GM12878 (cell line): ENCODE measurements at regions of chr2 and their contacts with region 1.

Region 1: DNA sequence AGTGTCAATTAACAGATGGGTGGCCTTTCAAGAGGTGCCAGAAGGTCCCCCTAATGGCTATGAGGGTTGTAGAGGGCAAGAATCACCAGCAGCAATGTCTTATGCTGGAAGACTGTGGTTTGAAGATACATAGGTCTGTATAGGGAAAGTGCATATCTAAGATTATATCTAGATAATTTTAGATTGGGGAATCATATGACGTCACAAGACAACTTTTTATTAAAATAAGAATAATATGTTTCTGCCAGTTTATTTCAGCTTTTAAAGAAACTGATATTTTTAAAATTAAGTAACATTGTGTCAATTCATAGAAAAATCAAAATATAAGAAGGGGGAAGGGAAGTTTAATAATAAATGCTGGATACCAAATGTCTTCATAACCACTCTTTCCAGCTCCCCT is 162.3 kb downstream of the TTN start:
- DNase-seq: no peak
- ATAC-seq: no peak
- H3K4me3 ChIP-seq: no peak overlapping the region
- H3K27ac ChIP-seq: no peak overlapping the region
- H3K4me1 ChIP-seq: no peaks in the 10 kb centered on the region
- H3K27me3 ChIP-seq: no peaks in the 10 kb centered on the region
- CTCF ChIP-seq: no peak
- EP300 ChIP-seq: no peak
- POLR2A ChIP-seq: no peak
- RAD21 ChIP-seq: no peak

Region 2: DNA sequence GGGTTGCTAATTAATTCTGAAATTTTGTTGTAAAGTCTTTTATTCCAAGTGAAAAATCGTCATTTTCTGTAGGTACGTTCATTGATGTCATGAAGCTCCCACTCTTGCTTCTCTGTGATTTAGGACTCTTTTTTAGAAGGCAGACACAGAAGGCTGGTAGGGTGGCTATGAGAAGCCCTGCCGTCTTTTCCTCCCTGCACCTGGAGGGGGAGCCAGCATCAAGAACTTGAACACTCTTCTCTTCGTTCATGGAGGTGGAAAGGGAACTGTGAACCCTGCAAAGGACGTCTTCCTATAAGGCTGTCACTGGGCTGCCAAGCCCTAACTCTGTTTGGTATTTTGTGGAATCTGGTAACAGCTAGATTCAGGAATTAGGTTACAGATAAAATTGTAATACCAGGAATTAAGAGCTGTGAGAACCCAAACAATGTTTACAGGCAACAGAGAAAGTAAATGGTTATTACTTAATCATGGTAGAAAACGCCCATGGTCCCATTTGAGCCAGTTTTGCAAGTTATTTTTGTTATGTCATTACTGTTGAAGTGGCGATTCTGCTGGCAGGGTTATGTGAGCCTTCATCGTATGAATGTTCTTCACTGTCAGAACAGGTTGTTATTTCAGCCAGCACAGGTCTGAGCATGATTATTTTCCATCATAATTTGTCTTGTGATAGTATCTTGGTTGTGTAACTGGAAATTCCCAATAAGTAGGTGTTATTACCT is 338.4 kb before region 1 on chr2:
- CTCF ChIA-PET with region 1: no interaction called
- POLR2A ChIA-PET with region 1: no interaction called
- RAD21 ChIA-PET with region 1: no interaction called
- SMC1A ChIA-PET with region 1: no interaction called
- in situ Hi-C with region 1: no loop called
- intact Hi-C with region 1: loop called (anchors 10 kb)
- DNase-seq: peak; percentile 31
- ATAC-seq: peak; percentile 99
- H3K4me3 ChIP-seq: no peak overlapping the region
- H3K27ac ChIP-seq: no peak overlapping the region
- H3K4me1 ChIP-seq: no peaks in the 10 kb centered on the region
- H3K27me3 ChIP-seq: no peaks in the 10 kb centered on the region
- CTCF ChIP-seq: peak; percentile 74 to 87 (median 82)
- EP300 ChIP-seq: no peak
- POLR2A ChIP-seq: no peak
- RAD21 ChIP-seq: peak; percentile 81

Region 3: GRCh38 chr2:178574777-178575176 is 70.2 kb before region 1 on chr2:
- CTCF ChIA-PET with region 1: no interaction called
- POLR2A ChIA-PET with region 1: no interaction called
- RAD21 ChIA-PET with region 1: no interaction called
- SMC1A ChIA-PET with region 1: no interaction called
- in situ Hi-C with region 1: no loop called
- intact Hi-C with region 1: no loop called
- DNase-seq: no peak
- ATAC-seq: no peak
- H3K4me3 ChIP-seq: no peak overlapping the region
- H3K27ac ChIP-seq: no peak overlapping the region
- H3K4me1 ChIP-seq: no peaks in the 10 kb centered on the region
- H3K27me3 ChIP-seq: no peaks in the 10 kb centered on the region
- CTCF ChIP-seq: no peak
- EP300 ChIP-seq: no peak
- POLR2A ChIP-seq: no peak
- RAD21 ChIP-seq: no peak